Endothelial cell of umbilical vein (primary cell): ENCODE measurements at regions of chr13 and their contacts with region 1.

Region 1: DNA sequence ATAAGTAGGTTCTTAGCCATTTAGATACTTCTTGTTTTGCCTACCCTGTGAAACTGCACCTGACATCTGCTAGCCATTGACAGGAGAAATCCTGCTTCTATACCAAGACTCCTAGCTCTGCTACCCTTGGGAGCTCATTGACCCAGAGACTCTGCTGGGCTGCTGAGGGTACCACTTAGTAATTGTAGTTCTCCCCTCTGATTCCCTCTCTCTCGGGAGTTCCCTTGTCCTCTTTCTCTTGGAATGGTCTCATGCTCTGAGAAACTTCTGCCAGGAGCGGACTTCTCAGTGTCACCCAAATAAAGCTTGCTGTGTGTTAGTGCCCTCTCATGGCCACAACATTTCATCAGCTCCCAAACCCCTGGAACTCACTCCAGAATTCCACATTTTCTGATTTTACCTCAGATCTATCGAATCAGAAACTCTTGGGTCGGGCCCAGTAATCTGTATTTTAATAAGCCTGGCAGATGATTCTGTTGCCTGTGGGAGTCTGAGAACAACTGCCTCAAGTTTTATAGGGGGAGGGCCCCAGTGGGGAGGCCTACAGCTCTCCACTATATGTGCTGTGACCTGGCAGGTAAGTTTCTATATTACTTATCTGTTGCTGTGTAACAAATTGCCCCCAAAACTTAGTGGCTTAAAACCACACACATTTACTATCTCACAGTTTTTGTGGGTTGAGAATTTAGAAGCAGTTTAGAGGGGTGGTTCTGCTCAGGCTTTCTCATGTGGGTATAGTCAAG is 221.1 kb downstream of the TDRD3 start:
- DNase-seq: peak; percentile 33
- H3K4me3 ChIP-seq: no peak overlapping the region
- H3K27ac ChIP-seq: no peak overlapping the region
- H3K4me1 ChIP-seq: no peaks in the 10 kb centered on the region
- H3K27me3 ChIP-seq: peaks cover 6 to 18% of the 10 kb centered on the region in 2 experiments
- CTCF ChIP-seq: peak; percentile 18 to 37
- POLR2A ChIP-seq: no peak

Region 2: DNA sequence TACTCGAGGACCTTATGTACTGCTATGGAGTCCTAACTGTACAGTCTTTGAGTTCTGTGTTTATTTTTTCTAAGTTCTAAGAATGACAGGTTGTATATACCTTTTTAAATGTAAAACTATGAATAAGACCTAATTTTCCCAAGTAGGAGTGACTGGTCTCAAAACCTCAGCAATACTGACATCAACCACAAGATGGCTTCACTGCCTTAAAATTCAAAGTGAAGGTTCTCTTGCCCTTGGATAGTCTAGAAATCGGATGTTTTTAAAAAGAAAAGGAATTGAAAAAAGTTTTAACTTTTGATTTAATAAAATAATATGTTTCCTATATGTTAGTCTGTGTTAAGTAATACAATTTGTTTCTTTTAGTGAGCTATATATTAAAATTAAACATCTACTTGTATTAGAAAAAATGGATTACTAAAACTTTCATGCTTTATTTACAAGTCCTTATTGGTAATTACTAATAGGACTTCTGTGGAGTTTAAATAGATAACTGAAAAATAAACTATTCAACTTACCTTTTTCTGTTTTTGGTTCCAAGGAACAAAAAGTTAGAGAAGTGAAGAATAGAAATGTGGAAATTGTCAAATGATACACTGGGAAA is 169.2 kb before region 1 on chr13:
- CTCF ChIA-PET with region 1: interaction called, 57 read pairs
- POLR2A ChIA-PET with region 1: no interaction called
- dilution Hi-C with region 1: no loop called
- intact Hi-C with region 1: loop called (anchors 1 kb)
- DNase-seq: peak; percentile 75
- H3K4me3 ChIP-seq: no peak overlapping the region
- H3K27ac ChIP-seq: no peak overlapping the region
- H3K4me1 ChIP-seq: no peaks in the 10 kb centered on the region
- H3K27me3 ChIP-seq: no peaks in the 10 kb centered on the region
- CTCF ChIP-seq: peak; percentile 48 to 56
- POLR2A ChIP-seq: no peak

Region 3: GRCh38 chr13:60467098-60467497 is 151.1 kb before region 1 on chr13:
- CTCF ChIA-PET with region 1: interaction called, 31 read pairs
- POLR2A ChIA-PET with region 1: no interaction called
- dilution Hi-C with region 1: no loop called
- intact Hi-C with region 1: no loop called
- DNase-seq: no peak
- H3K4me3 ChIP-seq: no peak overlapping the region
- H3K27ac ChIP-seq: no peak overlapping the region
- H3K4me1 ChIP-seq: no peaks in the 10 kb centered on the region
- H3K27me3 ChIP-seq: no peaks in the 10 kb centered on the region
- CTCF ChIP-seq: no peak
- POLR2A ChIP-seq: no peak